Left colon (tissue), 2 donors: ENCODE measurements at regions of chr15 and their contacts with region 1.

Region 1: GRCh38 chr15:75801859-75802593 is 41.2 kb upstream of the UBE2Q2 start:
- DNase-seq: peak; percentile 69 to 81
- ATAC-seq: peak; percentile 100

Region 2: DNA sequence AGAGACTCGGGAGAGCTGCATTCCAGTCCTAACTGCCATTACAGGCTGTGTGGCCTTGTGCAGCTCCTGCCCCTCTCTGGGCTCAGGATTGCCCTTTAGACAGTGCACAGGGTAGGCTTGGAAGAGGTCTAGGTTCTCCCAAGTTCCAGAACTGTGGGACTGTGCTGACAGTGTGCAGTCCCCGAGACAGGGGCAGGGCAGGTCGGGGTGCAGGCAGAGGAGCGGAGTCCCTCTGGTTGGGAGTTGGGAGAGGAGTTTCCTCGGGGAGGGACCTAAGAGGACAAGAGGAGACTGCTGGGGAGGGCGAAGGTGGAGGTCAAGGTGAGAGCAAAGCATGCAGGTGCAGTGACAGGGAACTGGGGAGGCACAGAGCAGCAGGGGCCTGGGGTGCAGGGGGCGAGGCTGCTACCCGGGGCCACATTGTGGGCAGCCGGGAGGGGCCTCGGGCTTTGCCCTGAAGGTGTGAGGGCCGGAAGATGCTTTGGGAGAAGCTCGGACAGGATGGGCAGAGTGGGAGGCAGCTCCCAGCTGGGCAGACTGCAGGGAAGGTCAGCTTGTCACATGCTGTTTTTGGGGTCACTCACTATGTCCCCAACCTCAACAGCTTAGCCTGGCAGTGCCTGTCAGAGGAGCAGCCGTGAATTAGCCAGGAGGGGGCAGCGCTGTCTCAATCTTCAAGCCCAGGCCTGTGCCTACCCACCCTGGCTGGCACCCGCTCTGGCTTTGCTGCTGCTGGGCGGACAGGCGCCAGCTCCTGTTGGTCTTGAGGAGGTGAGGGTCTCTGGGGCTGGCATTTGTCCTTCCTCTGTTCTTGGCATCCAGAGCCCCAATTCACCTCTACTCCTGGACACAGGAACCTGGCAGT is 73.9 kb before region 1 on chr15:
- intact Hi-C with region 1: loop called in 1 of 2 experiments (anchors 5 kb)
- DNase-seq: peak in 1 of 2 donors; percentile 75
- ATAC-seq: peak; percentile 48